Activated CD8-positive, alpha-beta T cell treated with anti-CD3 and anti-CD28 coated beads for 36 hours (primary cell): ENCODE measurements at regions of chr2 and their contacts with region 1.

Region 1: DNA sequence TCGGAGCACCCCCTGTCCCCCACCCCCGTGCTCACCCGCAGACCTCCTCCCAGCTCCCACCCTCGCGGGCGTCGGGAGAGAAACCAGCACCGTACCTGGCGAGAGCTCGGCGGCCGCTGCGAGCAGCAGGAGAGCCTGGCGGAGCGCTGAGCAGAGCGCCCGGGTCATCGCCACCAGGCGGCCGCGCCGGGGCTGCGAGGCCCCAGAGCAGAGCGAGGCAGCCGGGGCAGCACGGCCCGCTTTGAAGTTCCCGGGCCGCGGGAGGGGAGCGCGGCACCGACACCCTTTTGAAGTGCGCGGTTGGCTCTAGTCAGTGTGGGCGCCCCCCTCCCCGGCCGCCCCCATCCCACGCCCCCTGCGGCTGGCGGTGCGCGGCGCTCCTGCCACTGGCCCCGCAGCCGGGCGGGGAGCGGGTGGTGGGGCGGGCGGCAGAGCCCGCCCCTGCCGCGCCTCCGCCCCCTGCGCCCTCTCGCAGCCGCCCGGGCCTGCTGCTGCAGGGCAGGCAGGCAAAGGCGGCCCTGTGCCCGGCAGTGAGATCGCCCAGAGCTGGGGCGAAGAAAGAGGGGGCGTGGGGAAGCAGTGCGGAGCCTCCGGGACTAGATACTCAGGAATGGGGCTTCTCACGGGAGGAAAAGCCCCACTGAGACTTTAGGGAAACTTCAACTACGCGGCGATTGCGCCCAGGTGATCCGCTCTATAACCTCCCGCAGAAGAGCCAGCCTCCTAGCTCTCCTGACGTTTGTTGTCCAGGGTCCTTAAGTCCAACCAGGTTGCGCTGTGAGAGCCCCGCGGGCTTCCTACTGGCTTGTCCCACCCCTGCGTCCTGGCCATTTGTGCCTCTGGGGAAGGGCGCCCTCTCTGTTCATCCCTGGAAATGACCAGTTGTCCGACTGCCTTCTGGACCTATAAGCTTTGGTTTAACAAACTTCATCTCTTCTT is at the start of gene ACVR1C:
- DNase-seq: peak; percentile 72
- ATAC-seq: peak; percentile 87
- H3K4me3 Mint-ChIP-seq: peak within 1 kb of the TSS; percentile 79
- H3K27ac Mint-ChIP-seq: peak within 1 kb of the TSS; percentile 45
- H3K4me1 Mint-ChIP-seq: peaks cover 31% of the 10 kb centered on the region
- H3K27me3 Mint-ChIP-seq: peaks cover 6% of the 10 kb centered on the region
- CTCF ChIP-seq: peak; percentile 53
- total RNA-seq, gene ACVR1C: 1.7 to 2.2 TPM

Region 2: DNA sequence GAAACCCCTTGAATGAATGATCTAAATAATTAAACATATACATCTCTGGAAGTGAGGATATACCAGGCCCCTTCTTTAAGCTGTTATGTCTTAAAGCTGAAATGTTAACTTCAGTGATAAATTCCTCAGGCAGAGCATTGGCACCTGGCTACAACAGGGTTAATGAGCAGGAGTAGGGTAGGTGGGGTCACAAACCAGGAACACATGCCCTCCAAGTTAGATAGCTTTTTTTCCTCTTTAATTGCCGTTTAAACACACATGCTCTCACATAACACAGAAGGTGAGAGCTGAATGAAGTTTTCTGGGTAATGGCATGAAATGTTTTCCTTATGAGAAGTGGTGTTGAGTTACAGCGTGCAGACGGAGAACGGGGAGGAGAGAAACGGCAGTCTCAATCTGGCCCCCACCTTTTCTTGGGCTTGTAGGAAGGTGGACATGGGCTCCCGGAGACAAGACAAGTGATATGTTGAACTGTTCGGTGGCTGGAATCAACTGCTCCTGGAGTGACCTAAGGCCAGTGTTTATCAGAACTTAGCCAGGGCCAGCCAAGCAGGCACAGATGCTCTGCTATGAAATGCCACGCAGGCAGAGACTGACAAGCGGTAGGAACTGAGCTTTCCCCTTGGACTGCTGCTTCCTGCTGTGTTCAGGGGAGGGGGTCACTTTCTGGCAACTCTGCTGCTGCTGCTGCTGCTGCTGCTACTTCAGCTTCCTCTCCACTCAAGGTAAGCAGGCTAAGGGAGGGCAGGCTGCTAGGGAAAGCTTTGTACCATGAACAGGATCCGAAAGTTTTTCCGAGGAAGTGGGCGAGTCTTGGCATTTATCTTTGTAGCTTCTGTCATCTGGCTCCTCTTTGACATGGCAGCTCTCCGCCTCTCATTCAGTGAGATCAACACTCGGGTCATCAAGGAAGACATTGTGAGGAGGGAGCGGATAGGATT is 371.2 kb before region 1 on chr2 and contains the start of gene GALNT5:
- CTCF ChIA-PET with region 1: no interaction called
- POLR2A ChIA-PET with region 1: no interaction called
- intact Hi-C with region 1: no loop called
- DNase-seq: no peak
- ATAC-seq: no peak
- H3K4me3 Mint-ChIP-seq: no peak within 1 kb of the TSS
- H3K27ac Mint-ChIP-seq: no peak within 1 kb of the TSS
- H3K4me1 Mint-ChIP-seq: peaks cover 36% of the 10 kb centered on the region
- H3K27me3 Mint-ChIP-seq: peaks cover 20% of the 10 kb centered on the region
- CTCF ChIP-seq: no peak
- total RNA-seq, gene GALNT5: not detected

Region 3: GRCh38 chr2:157315901-157316300 is 312.8 kb before region 1 on chr2:
- CTCF ChIA-PET with region 1: no interaction called
- POLR2A ChIA-PET with region 1: no interaction called
- intact Hi-C with region 1: no loop called
- DNase-seq: no peak
- ATAC-seq: no peak
- H3K4me3 Mint-ChIP-seq: no peak overlapping the region
- H3K27ac Mint-ChIP-seq: no peak overlapping the region
- H3K4me1 Mint-ChIP-seq: peaks cover 21% of the 10 kb centered on the region
- H3K27me3 Mint-ChIP-seq: no peaks in the 10 kb centered on the region
- CTCF ChIP-seq: no peak

Region 4: GRCh38 chr2:157596992-157597681 is 31.6 kb before region 1 on chr2:
- CTCF ChIA-PET with region 1: interaction called, 28 read pairs
- POLR2A ChIA-PET with region 1: interaction called, 3 read pairs
- intact Hi-C with region 1: no loop called
- DNase-seq: peak; percentile 71
- ATAC-seq: peak; percentile 90
- H3K4me3 Mint-ChIP-seq: peak overlapping the region; percentile 55
- H3K27ac Mint-ChIP-seq: no peak overlapping the region
- H3K4me1 Mint-ChIP-seq: peaks cover 10% of the 10 kb centered on the region
- H3K27me3 Mint-ChIP-seq: peaks cover 11% of the 10 kb centered on the region
- CTCF ChIP-seq: peak; percentile 71

Region 5: GRCh38 chr2:157644776-157645175 is 16.0 kb after region 1 on chr2:
- CTCF ChIA-PET with region 1: interaction called, 10 read pairs
- POLR2A ChIA-PET with region 1: no interaction called
- intact Hi-C with region 1: no loop called
- DNase-seq: no peak
- ATAC-seq: no peak
- H3K4me3 Mint-ChIP-seq: no peak overlapping the region
- H3K27ac Mint-ChIP-seq: no peak overlapping the region
- H3K4me1 Mint-ChIP-seq: no peaks in the 10 kb centered on the region
- H3K27me3 Mint-ChIP-seq: peaks cover 9% of the 10 kb centered on the region
- CTCF ChIP-seq: no peak

Region 6: DNA sequence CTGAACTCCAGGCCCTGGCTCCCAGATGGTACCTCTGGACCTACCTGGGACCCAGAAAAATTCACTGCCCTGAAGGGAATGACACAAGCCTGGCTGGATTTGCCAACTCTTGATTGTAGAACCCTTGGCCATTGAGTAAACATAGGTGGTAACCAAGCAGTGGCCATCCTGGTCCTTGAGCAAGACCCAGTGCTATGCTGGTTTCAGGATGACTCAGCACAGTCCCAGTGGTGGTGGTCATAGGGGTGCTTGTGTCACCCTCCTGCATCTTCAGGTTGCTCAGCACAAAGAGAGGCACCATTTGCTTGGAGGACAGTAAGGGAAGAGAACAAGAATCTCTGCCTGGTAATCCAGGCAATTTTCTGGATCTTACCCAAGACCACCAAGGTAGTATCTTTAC is 525.8 kb after region 1 on chr2:
- CTCF ChIA-PET with region 1: no interaction called
- POLR2A ChIA-PET with region 1: no interaction called
- intact Hi-C with region 1: no loop called
- DNase-seq: no peak
- ATAC-seq: no peak
- H3K4me3 Mint-ChIP-seq: no peak overlapping the region
- H3K27ac Mint-ChIP-seq: no peak overlapping the region
- H3K4me1 Mint-ChIP-seq: no peaks in the 10 kb centered on the region
- H3K27me3 Mint-ChIP-seq: peaks cover 4% of the 10 kb centered on the region
- CTCF ChIP-seq: no peak